ENCODE measurements at regions of chr22 and their contacts with region 1.

Region 1: DNA sequence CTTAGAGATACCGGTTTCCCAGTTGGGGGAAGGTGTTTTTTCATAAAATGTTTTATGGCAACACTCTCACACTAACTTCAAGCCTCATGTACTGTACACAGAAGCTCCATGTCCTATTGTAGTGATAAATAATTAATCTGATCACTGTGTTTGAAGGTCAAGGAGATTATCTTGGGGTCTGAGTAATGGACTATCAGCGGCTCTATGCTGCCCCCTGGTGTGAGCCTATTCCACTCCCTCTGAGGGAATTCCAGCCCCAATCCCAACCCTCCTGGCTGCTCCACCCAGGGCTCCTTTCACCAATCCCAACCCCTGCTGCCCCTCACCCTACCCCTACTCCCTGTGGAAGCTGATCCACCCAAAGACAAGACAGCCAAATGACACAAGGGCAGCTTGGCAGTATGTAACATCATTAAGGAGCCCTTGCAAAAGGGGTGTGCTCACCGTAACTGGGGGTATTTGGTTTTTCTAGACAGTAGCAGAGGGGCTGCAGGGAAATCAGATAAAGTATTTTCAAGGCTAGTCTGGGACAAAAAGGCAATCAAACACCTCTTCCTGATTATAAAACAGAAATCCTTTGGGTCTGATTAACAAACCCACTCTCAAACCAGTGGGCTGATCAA is 22.3 kb downstream of the HPS4 start:
- DNase-seq: peak; percentile 84
- H3K4me3 ChIP-seq: no peak overlapping the region; a peak in 1 of 4 replicates
- H3K27ac ChIP-seq: no peak overlapping the region
- H3K4me1 ChIP-seq: peaks cover 0 to 2% of the 10 kb centered on the region in 2 experiments; a peak in 2 of 4 replicates
- H3K27me3 ChIP-seq: no peaks in the 10 kb centered on the region
- CTCF ChIP-seq: peak; percentile 93
- EP300 ChIP-seq: no peak
- RAD21 ChIP-seq: peak; percentile 80

Region 2: DNA sequence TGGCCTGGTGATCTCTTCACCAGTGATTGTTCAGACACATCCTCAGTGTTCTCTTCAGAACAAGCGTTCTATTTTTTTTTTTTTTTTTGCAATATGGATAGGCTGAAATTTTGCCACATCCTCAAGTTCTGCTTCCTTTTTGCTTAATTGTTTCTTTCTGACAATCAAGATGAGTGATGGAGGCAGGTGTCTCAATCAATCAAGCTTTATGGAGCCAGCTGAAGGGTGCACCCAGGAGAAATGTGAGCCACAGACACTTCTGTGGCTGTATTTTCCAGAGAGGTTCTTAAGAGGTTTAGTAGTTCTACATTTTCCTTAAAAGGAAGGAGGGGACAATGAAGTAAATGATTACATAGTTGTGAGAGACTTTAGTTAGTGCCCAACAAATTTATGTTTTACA is 76.1 kb before region 1 on chr22:
- CTCF ChIA-PET with region 1: interaction called, 25 read pairs
- POLR2A ChIA-PET with region 1: no interaction called
- DNase-seq: no peak
- H3K4me3 ChIP-seq: no peak overlapping the region
- H3K27ac ChIP-seq: no peak overlapping the region
- H3K4me1 ChIP-seq: no peaks in the 10 kb centered on the region
- H3K27me3 ChIP-seq: no peaks in the 10 kb centered on the region; the same call in 1 of the 2 replicates
- CTCF ChIP-seq: no peak
- EP300 ChIP-seq: no peak
- RAD21 ChIP-seq: no peak

Region 3: DNA sequence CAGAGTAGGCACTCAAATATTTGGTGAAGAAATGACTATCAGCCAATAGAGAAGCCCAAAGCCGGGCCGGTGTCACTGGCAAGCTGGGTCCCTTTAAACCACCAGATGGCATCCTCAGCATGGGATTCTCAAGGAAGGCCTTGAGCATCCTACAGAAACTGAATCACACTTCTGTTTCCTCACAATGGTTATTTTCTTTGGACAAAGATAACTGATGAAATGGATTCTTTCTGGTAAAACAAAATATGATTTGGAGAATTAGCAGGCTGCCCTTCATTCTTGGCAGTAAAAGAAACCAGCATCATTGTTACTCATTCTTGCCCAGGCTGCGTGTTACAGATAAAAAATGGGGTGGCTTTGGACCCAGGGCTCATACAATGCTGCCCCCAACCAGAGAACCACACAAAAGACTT is 62.6 kb before region 1 on chr22:
- CTCF ChIA-PET with region 1: interaction called, 83 read pairs
- POLR2A ChIA-PET with region 1: no interaction called
- DNase-seq: peak; percentile 65
- H3K4me3 ChIP-seq: no peak overlapping the region; a peak in 1 of 4 replicates
- H3K27ac ChIP-seq: no peak overlapping the region
- H3K4me1 ChIP-seq: 0 out of 4 replicates have a peak, but pooled peaks cover 0 to 4% of the 10 kb centered on the region in 2 experiments
- H3K27me3 ChIP-seq: no peaks in the 10 kb centered on the region; the same call in 1 of the 2 replicates
- CTCF ChIP-seq: peak; percentile 84
- EP300 ChIP-seq: no peak
- RAD21 ChIP-seq: peak; percentile 91

Region 4: GRCh38 chr22:26418620-26419019 is 42.7 kb before region 1 on chr22:
- CTCF ChIA-PET with region 1: interaction called, 22 read pairs
- POLR2A ChIA-PET with region 1: no interaction called
- DNase-seq: no peak
- H3K4me3 ChIP-seq: no peak overlapping the region
- H3K27ac ChIP-seq: no peak overlapping the region
- H3K4me1 ChIP-seq: peaks cover 0 to 2% of the 10 kb centered on the region in 2 experiments; a peak in 1 of 4 replicates
- H3K27me3 ChIP-seq: no peaks in the 10 kb centered on the region; the same call in 1 of the 2 replicates
- CTCF ChIP-seq: no peak
- EP300 ChIP-seq: no peak
- RAD21 ChIP-seq: no peak

Region 5: DNA sequence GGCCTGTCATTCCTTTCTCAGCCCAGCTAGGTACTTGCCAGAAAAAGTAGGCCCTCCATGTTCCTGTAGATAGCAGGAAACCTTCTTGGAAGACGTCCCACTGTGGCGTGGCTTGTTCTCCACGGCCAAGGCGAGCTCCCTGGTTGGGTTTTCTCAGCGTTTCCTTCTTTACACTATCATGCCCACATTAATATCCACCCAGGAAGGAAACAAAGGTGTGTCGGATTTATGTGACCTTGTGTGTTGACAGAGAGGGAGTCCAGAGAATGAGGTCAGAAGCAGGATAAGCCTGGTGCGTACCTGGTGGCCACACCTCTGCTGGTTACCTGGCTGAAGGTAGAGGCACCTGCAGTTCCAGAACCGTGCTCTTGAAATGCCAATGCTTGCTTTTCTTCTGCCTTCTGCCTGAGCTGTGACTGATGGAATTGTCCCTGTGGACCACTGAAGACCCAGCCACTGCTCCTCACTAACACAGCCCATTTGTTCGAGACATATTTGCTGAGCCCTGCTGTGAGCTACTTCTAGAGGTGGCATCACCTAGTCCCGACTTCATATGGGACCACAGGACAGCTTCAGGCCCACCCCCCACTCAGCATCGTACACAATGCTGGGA is 24.3 kb before region 1 on chr22:
- CTCF ChIA-PET with region 1: interaction called, 18 read pairs
- POLR2A ChIA-PET with region 1: no interaction called
- DNase-seq: no peak
- H3K4me3 ChIP-seq: no peak overlapping the region
- H3K27ac ChIP-seq: no peak overlapping the region
- H3K4me1 ChIP-seq: no peaks in the 10 kb centered on the region; a peak in 1 of 4 replicates
- H3K27me3 ChIP-seq: no peaks in the 10 kb centered on the region
- CTCF ChIP-seq: no peak
- EP300 ChIP-seq: no peak
- RAD21 ChIP-seq: no peak

Region 6: DNA sequence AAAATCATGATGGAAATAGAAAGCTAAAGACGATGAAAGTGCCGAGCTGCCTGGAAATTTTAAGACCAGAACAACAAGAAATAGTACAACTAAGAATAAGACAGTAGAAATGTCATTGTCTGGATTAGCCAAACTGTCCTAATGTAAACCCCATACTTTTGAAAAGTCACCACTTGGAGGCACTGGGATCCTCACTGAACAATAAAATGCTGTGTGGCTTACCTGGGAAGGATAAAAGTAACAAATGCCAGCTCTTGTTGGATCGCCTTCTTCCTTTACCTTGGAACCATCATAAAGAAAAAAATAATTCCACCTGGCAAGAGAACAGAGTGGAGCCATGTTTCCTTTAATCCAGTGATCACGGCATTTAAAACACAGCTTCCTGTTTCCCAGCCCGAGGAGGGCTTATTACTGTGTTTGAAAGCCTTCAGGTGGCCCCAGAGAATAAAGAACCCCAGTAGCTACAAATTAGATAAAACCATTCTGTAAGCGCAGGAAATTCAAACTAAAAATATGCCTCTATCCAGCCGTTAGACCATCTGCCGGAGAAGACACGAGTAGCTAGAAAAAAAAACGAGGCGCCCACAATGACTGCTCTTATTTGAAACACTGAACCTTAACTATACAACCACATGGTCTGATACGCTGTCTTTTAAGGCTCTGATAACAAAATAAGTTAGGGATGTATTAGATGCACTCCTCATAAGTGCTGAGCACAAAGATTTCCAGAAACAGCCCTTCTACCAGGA is 17.9 kb after region 1 on chr22:
- CTCF ChIA-PET with region 1: interaction called, 17 read pairs
- POLR2A ChIA-PET with region 1: interaction called, 3 read pairs
- DNase-seq: no peak
- H3K4me3 ChIP-seq: 0 out of 4 replicates have a peak overlapping the region, but pooled peaks of 1 of the 2 experiments have one; percentile 14
- H3K27ac ChIP-seq: no peak overlapping the region
- H3K4me1 ChIP-seq: peaks cover 4 to 17% of the 10 kb centered on the region in 2 experiments; a peak in 3 of 4 replicates
- H3K27me3 ChIP-seq: no peaks in the 10 kb centered on the region
- CTCF ChIP-seq: no peak
- EP300 ChIP-seq: no peak
- RAD21 ChIP-seq: no peak